Tibial artery (tissue), 4 donors: ENCODE measurements at regions of chr22 and their contacts with region 1.

Region 1: GRCh38 chr22:24768537-24769374 is 5.8 kb downstream of the PIWIL3 start:
- DNase-seq: peak in 1 of 2 donors; percentile 63
- H3K4me3 ChIP-seq: no peak overlapping the region
- H3K27ac ChIP-seq: no peak overlapping the region
- H3K4me1 ChIP-seq: no peaks in the 10 kb centered on the region
- H3K27me3 ChIP-seq: peaks cover 0 to 27% of the 10 kb centered on the region in 2 donors
- CTCF ChIP-seq: peak; percentile 72 to 77

Region 2: DNA sequence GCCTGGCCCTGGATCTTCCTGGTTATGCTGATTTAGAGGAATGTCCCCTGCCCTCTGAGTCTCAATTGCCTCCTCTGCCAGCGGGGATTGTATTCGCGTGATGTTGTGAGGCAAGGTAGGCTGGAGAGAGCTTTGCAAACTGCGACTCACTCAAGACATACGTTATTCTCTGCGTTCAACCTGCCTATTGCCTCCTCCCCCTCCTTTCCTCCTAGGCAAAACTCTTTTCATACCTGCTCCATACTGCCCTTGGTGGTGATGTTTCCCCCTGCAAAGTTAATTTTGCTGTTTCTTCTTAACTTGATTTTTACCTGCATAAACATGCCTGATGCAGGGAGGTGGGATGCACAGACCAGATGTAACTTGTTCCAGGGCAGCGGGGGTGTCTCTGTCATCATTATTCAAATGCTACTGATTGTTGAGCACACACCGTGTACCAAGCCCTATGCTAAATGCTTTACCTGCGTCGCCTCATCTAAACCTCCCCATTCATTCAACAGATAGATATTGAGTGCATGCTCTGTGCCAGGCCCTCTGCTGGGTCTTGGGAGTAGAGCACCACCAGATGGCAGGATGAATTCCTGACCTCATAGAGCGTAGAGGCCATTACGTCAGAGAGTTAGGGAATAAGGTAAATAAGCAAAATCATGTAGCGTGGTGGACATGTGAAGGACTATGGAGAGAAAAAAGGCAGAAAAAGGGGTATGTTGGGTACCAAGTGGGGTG is 66.3 kb after region 1 on chr22:
- intact Hi-C with region 1: loop called (anchors 2 kb)
- DNase-seq: no peak
- H3K4me3 ChIP-seq: no peak overlapping the region
- H3K27ac ChIP-seq: no peak overlapping the region
- H3K4me1 ChIP-seq: no peaks in the 10 kb centered on the region
- H3K27me3 ChIP-seq: no peaks in the 10 kb centered on the region
- CTCF ChIP-seq: no peak

Region 3: DNA sequence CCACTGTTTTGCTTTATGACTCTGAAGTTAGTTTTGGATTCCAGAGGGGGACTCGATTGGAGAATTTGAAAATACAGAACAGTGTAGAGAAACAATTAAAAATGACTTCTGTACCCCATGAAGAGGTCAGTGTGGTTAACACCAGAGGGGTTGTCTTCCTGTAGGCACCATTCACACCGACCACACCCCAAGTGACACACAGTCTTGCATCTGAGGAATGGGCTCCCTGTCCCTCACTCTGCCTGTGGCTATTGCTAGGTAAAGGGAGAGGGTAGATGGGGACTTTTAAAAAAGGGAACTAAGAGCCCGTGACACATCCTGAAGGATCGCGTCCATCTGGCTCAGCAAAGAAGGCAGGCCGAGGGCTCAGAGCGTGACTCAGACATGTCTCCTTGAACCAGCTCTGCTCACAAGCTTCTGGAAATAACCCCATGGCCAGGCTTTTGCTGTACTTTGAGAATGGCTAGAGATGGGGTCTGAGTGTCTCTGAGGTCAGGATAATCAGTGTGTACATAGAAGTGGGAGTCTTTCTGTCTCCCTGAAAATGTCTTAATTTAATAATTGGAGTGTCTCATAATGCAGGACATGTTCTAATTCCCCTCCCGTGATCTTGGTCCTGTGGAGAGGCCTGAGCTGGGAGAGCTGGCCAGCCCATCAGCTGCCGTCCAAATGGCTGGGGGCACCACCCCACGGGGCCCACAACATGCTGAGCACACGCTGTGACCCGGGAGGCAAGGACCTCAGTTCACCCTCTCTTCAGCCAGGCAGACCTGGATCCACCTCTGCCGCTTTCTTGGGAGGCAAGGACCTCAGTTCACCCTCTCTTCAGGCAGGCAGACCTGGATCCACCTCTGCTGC is 76.5 kb after region 1 on chr22:
- intact Hi-C with region 1: loop called (anchors 5 kb)
- DNase-seq: peak; percentile 75 to 77
- H3K4me3 ChIP-seq: no peak overlapping the region
- H3K27ac ChIP-seq: peak overlapping the region; percentile 23 to 50
- H3K4me1 ChIP-seq: peaks cover 0 to 7% (median 2%) of the 10 kb centered on the region in 4 donors
- H3K27me3 ChIP-seq: no peaks in the 10 kb centered on the region
- CTCF ChIP-seq: no peak

Region 4: GRCh38 chr22:24920029-24920428 is 151.3 kb after region 1 on chr22:
- intact Hi-C with region 1: no loop called
- DNase-seq: no peak
- H3K4me3 ChIP-seq: no peak overlapping the region
- H3K27ac ChIP-seq: no peak overlapping the region
- H3K4me1 ChIP-seq: no peaks in the 10 kb centered on the region
- H3K27me3 ChIP-seq: no peaks in the 10 kb centered on the region
- CTCF ChIP-seq: no peak